ENCODE measurements at regions of chr18 and their contacts with region 1.

Region 1: GRCh38 chr18:58671111-58671631 is at the start of gene MALT1:
- DNase-seq: peak; percentile 86 to 98 (median 94)
- ATAC-seq: peak; percentile 85 to 86
- H3K4me3 Mint-ChIP-seq: peak within 1 kb of the TSS; percentile 91 to 97 (median 94)
- H3K27ac Mint-ChIP-seq: peak within 1 kb of the TSS; percentile 89 to 98 (median 94)
- H3K4me1 Mint-ChIP-seq: peaks cover 21 to 65% (median 50%) of the 10 kb centered on the region in 4 donors
- H3K27me3 Mint-ChIP-seq: no peaks in the 10 kb centered on the region
- polyA plus RNA-seq, gene MALT1: 24.7 to 37.1 (median 27.3) TPM

Region 2: GRCh38 chr18:58529714-58530354 is 141.3 kb before region 1 on chr18:
- POLR2A ChIA-PET with region 1: interaction called, 16 read pairs
- DNase-seq: peak; percentile 48 to 87 (median 66)
- ATAC-seq: peak; percentile 84 to 87
- H3K4me3 Mint-ChIP-seq: no peak overlapping the region
- H3K27ac Mint-ChIP-seq: peak overlapping the region in 1 of 10 donors; percentile 11
- H3K4me1 Mint-ChIP-seq: peaks cover 2 to 14% (median 5%) of the 10 kb centered on the region in 4 donors
- H3K27me3 Mint-ChIP-seq: peaks cover 0 to 2% (median 0%) of the 10 kb centered on the region in 5 donors

Region 3: DNA sequence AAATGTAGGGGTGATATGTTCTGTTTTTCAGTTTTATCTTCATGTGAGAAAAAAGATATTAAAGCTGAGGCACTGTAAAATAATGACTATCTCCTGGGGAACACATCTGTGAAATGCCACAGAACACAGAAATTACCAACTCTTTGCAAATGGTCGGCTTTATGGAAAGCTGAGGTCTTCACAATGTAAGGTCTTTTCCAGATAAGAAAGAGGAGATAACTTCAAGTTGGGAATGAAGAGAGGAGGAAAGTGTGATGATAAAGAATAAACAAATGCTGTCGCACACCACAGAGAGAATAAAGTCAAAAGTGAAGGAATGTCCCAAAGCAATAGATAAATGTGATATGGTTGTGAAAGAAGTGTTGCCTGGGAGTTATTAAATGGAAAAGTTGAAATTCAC is 41.1 kb before region 1 on chr18:
- POLR2A ChIA-PET with region 1: interaction called, 14 read pairs
- DNase-seq: no peak
- ATAC-seq: no peak
- H3K4me3 Mint-ChIP-seq: no peak overlapping the region
- H3K27ac Mint-ChIP-seq: peak overlapping the region in 4 of 10 donors; percentile 5 to 68 (median 18)
- H3K4me1 Mint-ChIP-seq: peaks cover 14 to 27% (median 23%) of the 10 kb centered on the region in 4 donors
- H3K27me3 Mint-ChIP-seq: no peaks in the 10 kb centered on the region

Region 4: DNA sequence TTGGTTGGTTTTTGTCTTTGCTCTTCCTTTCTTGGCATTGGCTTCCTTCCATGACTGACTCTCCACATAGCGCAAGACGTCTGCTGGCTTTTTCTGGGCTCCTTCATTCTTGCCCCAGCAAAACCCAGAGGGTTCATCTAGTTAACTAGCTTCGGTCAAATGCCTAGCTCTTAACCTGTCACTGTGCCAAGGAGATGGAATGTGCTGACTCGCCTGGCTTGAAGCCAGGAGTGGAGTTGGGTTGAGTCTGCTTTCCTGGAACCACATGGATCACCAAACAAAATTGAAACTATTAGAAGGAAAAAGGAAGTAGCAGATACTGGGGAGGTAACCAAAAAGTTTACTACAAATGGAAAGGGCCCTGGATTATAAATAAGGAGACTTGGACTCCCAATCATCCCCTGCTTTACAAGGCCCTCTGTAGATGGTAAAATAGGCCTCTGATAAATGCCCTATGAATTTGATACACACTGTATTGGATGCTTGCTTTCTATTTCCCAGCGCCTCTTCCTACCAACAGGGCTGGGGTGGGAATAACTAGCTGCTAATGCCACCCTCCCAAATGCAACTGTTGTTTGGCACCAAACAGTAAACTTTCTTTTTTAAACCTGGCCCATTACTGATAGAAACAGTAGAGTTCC is 11.4 kb after region 1 on chr18:
- POLR2A ChIA-PET with region 1: interaction called, 98 read pairs
- DNase-seq: no peak
- ATAC-seq: no peak
- H3K4me3 Mint-ChIP-seq: no peak overlapping the region
- H3K27ac Mint-ChIP-seq: peak overlapping the region in 9 of 10 donors; percentile 9 to 81 (median 40)
- H3K4me1 Mint-ChIP-seq: peaks cover 20 to 66% (median 61%) of the 10 kb centered on the region in 4 donors
- H3K27me3 Mint-ChIP-seq: no peaks in the 10 kb centered on the region

Region 5: GRCh38 chr18:58699551-58699950 is 28.4 kb after region 1 on chr18:
- POLR2A ChIA-PET with region 1: interaction called, 12 read pairs
- DNase-seq: no peak
- ATAC-seq: no peak
- H3K4me3 Mint-ChIP-seq: no peak overlapping the region
- H3K27ac Mint-ChIP-seq: no peak overlapping the region
- H3K4me1 Mint-ChIP-seq: peaks cover 23 to 37% (median 28%) of the 10 kb centered on the region in 4 donors
- H3K27me3 Mint-ChIP-seq: no peaks in the 10 kb centered on the region

Region 6: GRCh38 chr18:58754544-58755068 is 83.4 kb after region 1 on chr18:
- POLR2A ChIA-PET with region 1: interaction called, 11 read pairs
- DNase-seq: peak in 5 of 10 donors; percentile 12 to 32 (median 27)
- ATAC-seq: peak; percentile 41 to 62
- H3K4me3 Mint-ChIP-seq: peak overlapping the region in 5 of 10 donors; percentile 18 to 74 (median 42)
- H3K27ac Mint-ChIP-seq: peak overlapping the region in 9 of 10 donors; percentile 1 to 91 (median 57)
- H3K4me1 Mint-ChIP-seq: peaks cover 23 to 50% (median 40%) of the 10 kb centered on the region in 4 donors
- H3K27me3 Mint-ChIP-seq: peaks cover 0 to 1% (median 0%) of the 10 kb centered on the region in 5 donors

Measured in naive thymus-derived CD8-positive, alpha-beta T cell (primary cell).